B cell (primary cell): ENCODE measurements at regions of chr2 and their contacts with region 1.

Region 1: DNA sequence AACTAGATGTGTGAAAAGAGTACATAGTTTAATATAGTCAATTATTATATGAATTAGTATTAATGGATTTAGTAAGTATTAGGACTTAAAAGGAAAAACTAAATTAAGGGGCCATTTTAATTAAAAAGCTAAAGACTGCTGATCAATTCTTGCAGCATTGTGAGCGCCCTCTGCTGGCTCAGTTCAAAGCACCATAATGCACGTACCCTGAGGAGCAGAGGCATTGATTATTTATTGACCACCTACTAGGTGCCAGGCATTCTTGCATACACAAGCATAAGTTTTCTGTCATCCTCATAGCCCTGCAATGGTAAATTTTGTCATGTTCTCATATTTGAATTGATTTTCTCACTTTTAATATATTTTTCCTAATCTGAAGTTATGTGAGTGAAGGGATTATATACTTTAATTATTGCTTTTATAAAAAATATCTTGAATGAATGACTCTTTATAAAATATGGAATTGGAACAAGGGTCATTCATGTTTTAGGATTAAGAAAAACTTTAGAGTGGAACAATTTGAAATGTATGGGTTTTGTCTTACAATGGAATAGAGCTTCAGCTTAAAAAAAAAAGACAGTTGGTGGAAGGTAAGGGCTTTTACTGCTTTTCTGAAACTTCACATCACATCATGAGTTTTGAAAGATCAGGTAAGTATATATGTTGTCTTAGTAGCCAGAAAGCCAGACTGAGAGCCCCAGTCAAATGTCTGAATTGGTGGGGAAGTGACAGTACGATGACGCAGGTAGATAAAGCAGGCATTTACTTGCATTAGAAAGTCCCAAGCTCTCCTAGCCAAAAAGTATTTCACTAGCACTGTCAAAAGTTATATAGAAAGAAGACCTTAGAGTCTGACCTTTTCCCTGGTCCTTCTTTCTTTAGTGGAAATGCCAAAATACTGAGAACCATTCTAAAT is 9.7 kb downstream of the ITGA4 start:
- DNase-seq: peak; percentile 84
- ATAC-seq: peak; percentile 52
- H3K4me3 ChIP-seq: no peak overlapping the region
- H3K4me3 Mint-ChIP-seq: no peak overlapping the region
- H3K27ac ChIP-seq: peak overlapping the region in 1 of 2 donors; percentile 69
- H3K27ac Mint-ChIP-seq: no peak overlapping the region
- H3K4me1 ChIP-seq: peaks cover 56 to 81% of the 10 kb centered on the region in 2 donors
- H3K4me1 Mint-ChIP-seq: peaks cover 87% of the 10 kb centered on the region
- H3K27me3 ChIP-seq: no peaks in the 10 kb centered on the region
- H3K27me3 Mint-ChIP-seq: no peaks in the 10 kb centered on the region
- CTCF ChIP-seq: peak; percentile 91

Region 2: GRCh38 chr2:180125245-180125962 is 1341.5 kb before region 1 on chr2:
- CTCF ChIA-PET with region 1: no interaction called
- POLR2A ChIA-PET with region 1: no interaction called
- intact Hi-C with region 1: loop called (anchors 5 kb)
- DNase-seq: peak; percentile 55
- ATAC-seq: peak; percentile 93
- H3K4me3 ChIP-seq: no peak overlapping the region
- H3K4me3 Mint-ChIP-seq: no peak overlapping the region
- H3K27ac ChIP-seq: no peak overlapping the region
- H3K27ac Mint-ChIP-seq: no peak overlapping the region
- H3K4me1 ChIP-seq: peaks cover 0 to 5% of the 10 kb centered on the region in 2 donors
- H3K4me1 Mint-ChIP-seq: peaks cover 4% of the 10 kb centered on the region
- H3K27me3 ChIP-seq: peaks cover 0 to 4% (median 0%) of the 10 kb centered on the region in 4 experiments
- H3K27me3 Mint-ChIP-seq: peaks cover 18% of the 10 kb centered on the region
- CTCF ChIP-seq: peak; percentile 66

Region 3: DNA sequence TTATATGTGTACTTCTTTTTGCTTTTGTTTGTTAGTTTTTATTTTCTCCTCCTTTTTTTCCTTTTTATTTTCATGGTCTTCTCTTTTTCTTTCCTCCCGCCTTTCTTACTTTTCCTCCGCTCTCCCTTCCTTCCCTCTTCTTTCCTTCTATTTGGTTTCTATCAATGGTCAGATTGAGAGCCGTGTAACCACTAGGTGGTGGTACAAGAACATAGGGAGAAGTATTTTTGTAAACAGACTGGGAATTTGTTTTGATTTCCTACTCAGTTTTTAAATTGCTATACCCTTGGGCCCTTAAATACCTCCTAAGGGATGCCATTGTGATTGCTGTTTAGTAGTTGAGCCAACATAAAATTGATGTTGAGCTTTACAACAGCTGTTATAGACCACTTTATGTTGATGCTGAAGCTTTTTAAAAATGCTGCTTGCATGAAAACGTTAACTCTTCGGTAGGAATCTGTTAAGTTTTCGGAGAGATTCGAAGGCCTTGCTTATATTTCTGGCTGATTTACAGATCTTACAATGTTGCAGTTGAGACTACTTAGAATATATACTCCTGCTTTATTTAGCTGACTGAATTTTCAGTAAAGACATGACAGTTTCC is 362.3 kb before region 1 on chr2:
- CTCF ChIA-PET with region 1: interaction called, 79 read pairs
- POLR2A ChIA-PET with region 1: no interaction called
- intact Hi-C with region 1: loop called (anchors 1 kb)
- DNase-seq: peak; percentile 65
- ATAC-seq: peak; percentile 41
- H3K4me3 ChIP-seq: no peak overlapping the region
- H3K4me3 Mint-ChIP-seq: no peak overlapping the region
- H3K27ac ChIP-seq: no peak overlapping the region
- H3K27ac Mint-ChIP-seq: no peak overlapping the region
- H3K4me1 ChIP-seq: no peaks in the 10 kb centered on the region
- H3K4me1 Mint-ChIP-seq: peaks cover 2% of the 10 kb centered on the region
- H3K27me3 ChIP-seq: no peaks in the 10 kb centered on the region
- H3K27me3 Mint-ChIP-seq: no peaks in the 10 kb centered on the region
- CTCF ChIP-seq: peak; percentile 81

Region 4: GRCh38 chr2:181319286-181319685 is 147.6 kb before region 1 on chr2:
- CTCF ChIA-PET with region 1: interaction called, 13 read pairs
- POLR2A ChIA-PET with region 1: no interaction called
- intact Hi-C with region 1: no loop called
- DNase-seq: no peak
- ATAC-seq: no peak
- H3K4me3 ChIP-seq: no peak overlapping the region
- H3K4me3 Mint-ChIP-seq: no peak overlapping the region
- H3K27ac ChIP-seq: no peak overlapping the region
- H3K27ac Mint-ChIP-seq: no peak overlapping the region
- H3K4me1 ChIP-seq: peaks cover 4 to 19% of the 10 kb centered on the region in 2 donors
- H3K4me1 Mint-ChIP-seq: peaks cover 12% of the 10 kb centered on the region
- H3K27me3 ChIP-seq: no peaks in the 10 kb centered on the region
- H3K27me3 Mint-ChIP-seq: no peaks in the 10 kb centered on the region
- CTCF ChIP-seq: no peak

Region 5: DNA sequence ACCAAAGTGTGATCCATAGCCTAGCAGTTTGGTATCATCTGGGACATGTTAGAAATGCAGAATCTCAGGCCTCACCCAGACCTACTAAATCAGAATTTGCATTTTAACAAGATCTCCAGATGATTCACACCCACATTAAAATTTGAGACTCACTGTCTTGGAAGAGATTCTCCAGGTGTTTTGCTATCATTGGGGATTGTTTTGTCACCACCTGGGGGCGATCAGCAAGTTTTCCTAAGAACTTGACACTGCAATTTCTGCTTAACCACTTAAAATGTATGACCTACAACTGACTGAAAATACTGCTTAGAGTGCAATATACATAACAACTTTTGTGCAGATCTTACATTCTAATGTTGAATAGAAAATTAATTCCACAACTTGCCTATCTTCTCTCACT is 28.7 kb before region 1 on chr2:
- CTCF ChIA-PET with region 1: interaction called, 32 read pairs
- POLR2A ChIA-PET with region 1: no interaction called
- intact Hi-C with region 1: no loop called
- DNase-seq: peak; percentile 50
- ATAC-seq: peak; percentile 21
- H3K4me3 ChIP-seq: no peak overlapping the region
- H3K4me3 Mint-ChIP-seq: no peak overlapping the region
- H3K27ac ChIP-seq: no peak overlapping the region
- H3K27ac Mint-ChIP-seq: peak overlapping the region; percentile 7
- H3K4me1 ChIP-seq: peaks cover 12 to 13% of the 10 kb centered on the region in 2 donors
- H3K4me1 Mint-ChIP-seq: peaks cover 21% of the 10 kb centered on the region
- H3K27me3 ChIP-seq: no peaks in the 10 kb centered on the region
- H3K27me3 Mint-ChIP-seq: no peaks in the 10 kb centered on the region
- CTCF ChIP-seq: no peak

Region 6: GRCh38 chr2:183059561-183059960 is 1592.6 kb after region 1 on chr2:
- CTCF ChIA-PET with region 1: no interaction called
- POLR2A ChIA-PET with region 1: no interaction called
- intact Hi-C with region 1: no loop called
- DNase-seq: no peak
- ATAC-seq: no peak
- H3K4me3 ChIP-seq: no peak overlapping the region
- H3K4me3 Mint-ChIP-seq: no peak overlapping the region
- H3K27ac ChIP-seq: no peak overlapping the region
- H3K27ac Mint-ChIP-seq: no peak overlapping the region
- H3K4me1 ChIP-seq: no peaks in the 10 kb centered on the region
- H3K4me1 Mint-ChIP-seq: no peaks in the 10 kb centered on the region
- H3K27me3 ChIP-seq: peaks cover 0 to 23% (median 9%) of the 10 kb centered on the region in 4 experiments
- H3K27me3 Mint-ChIP-seq: peaks cover 41% of the 10 kb centered on the region
- CTCF ChIP-seq: no peak